GM18951 (cell line): ENCODE measurements at regions of chr3 and their contacts with region 1.

Region 1: GRCh38 chr3:15199493-15200105 is 6.4 kb upstream of the CAPN7 start:
- POLR2A ChIP-seq: no peak

Region 2: GRCh38 chr3:15385901-15386653 is 186.5 kb after region 1 on chr3:
- in situ Hi-C with region 1: no loop called
- POLR2A ChIP-seq: no peak

Region 3: GRCh38 chr3:15405448-15406050 is 205.9 kb after region 1 on chr3:
- in situ Hi-C with region 1: loop called (anchors 10 kb)
- POLR2A ChIP-seq: no peak